Activated CD4-positive, alpha-beta T cell treated with anti-CD3 and anti-CD28 coated beads for 36 hours (primary cell): ENCODE measurements at regions of chr16 and their contacts with region 1.

Region 1: GRCh38 chr16:88452482-88453216 is 431 bp upstream of the ZFPM1 start:
- DNase-seq: peak; percentile 100
- ATAC-seq: peak; percentile 68
- H3K4me3 Mint-ChIP-seq: peak overlapping the region; percentile 74
- H3K27ac Mint-ChIP-seq: peak overlapping the region; percentile 78
- H3K4me1 Mint-ChIP-seq: peaks cover 24% of the 10 kb centered on the region
- H3K27me3 Mint-ChIP-seq: no peaks in the 10 kb centered on the region

Region 2: GRCh38 chr16:87387942-87388817 is 1064.5 kb before region 1 on chr16:
- CTCF ChIA-PET with region 1: no interaction called
- POLR2A ChIA-PET with region 1: no interaction called
- intact Hi-C with region 1: loop called in 1 of 2 experiments (anchors 2 kb)
- DNase-seq: peak; percentile 92
- ATAC-seq: peak; percentile 74
- H3K4me3 Mint-ChIP-seq: peak overlapping the region; percentile 36
- H3K27ac Mint-ChIP-seq: peak overlapping the region; percentile 95
- H3K4me1 Mint-ChIP-seq: peaks cover 49% of the 10 kb centered on the region
- H3K27me3 Mint-ChIP-seq: no peaks in the 10 kb centered on the region

Region 3: DNA sequence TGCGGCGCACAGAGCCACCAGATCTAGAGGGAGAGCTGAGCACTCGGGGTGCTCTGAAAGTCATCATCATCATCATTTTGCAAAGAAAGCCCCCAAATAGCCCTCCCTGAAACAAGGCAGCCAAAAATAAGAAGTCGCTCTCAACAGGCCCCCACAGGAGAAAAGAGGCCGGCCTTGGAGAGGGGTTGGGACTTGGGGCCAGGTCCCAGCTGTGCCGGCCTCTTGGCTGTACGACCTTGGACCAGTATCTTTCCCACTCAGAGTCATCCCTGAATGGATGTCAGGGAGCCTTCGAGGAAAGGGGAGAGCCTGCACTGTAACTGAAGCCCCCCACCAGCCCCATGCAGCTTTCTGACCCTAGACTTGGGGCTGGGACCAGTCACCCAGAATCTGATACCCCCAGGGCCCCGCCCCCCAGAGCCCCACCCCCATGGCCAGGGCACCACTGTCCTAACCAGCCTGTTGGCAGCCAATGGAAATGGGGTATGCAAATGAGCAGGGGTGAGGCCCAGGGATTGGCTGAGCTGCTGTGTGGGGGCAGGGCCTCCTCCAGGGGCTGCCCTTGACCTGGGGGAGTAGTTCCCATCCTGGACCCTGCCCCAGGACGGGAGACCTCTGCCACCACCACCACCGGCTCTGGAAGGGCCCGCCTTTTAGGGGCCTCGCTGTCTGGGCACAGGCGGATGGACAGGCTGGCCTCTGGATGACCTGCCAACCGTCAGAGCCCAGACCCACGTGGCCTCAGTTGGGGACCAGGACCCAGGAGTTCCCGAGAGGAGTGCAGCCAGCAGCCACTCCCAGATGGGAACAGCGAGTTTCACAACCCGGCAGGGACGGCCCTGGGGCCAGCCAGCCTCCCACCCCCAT is 15.9 kb after region 1 on chr16:
- CTCF ChIA-PET with region 1: interaction called, 3 read pairs
- POLR2A ChIA-PET with region 1: no interaction called
- intact Hi-C with region 1: loop called (anchors 1 to 2 kb)
- DNase-seq: peak; percentile 61
- ATAC-seq: peak; percentile 66
- H3K4me3 Mint-ChIP-seq: no peak overlapping the region
- H3K27ac Mint-ChIP-seq: no peak overlapping the region
- H3K4me1 Mint-ChIP-seq: peaks cover 62% of the 10 kb centered on the region
- H3K27me3 Mint-ChIP-seq: no peaks in the 10 kb centered on the region

Region 4: DNA sequence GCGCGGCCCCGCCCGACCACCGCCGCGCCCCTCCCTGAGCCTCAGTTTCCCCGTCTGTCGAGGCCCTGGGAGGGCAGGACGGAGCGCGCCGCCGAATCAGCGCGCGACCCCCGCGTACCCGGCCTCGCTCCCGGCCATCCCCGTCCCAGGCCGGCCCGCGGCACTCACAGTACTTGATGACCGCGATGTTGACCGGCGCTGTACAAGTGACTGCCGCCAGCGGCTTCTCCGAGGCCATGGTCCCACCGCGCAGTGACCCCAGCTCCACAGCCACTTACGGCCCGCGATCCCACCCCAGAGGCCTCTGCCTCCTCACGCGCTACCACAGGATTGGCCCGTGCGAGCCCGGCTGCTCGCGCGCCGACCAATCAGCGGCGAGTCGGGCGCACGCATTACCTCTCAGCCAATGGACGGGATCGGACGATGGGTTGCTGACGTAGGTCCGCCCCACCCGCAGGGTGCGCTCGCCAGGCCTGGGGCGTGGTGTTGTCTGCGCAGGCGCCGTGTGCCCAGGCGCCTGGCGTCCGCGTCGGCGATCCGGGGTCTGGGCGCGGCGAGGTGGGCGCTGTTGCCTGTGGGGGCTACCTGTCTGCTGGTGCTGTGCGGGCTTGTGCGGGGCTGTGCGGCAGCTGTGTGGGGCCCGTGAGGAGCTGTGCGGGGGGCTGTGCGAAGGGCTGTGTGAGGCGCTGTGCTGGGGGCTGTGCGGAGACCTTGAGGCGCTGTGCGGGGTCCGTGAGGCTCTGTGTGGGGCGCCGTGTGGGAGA is 210.4 kb after region 1 on chr16 and contains the start of gene MVD:
- CTCF ChIA-PET with region 1: no interaction called
- POLR2A ChIA-PET with region 1: no interaction called
- intact Hi-C with region 1: loop called in 1 of 2 experiments (anchors 1 kb)
- DNase-seq: peak; percentile 98
- ATAC-seq: peak; percentile 99
- H3K4me3 Mint-ChIP-seq: peak within 1 kb of the TSS; percentile 92
- H3K27ac Mint-ChIP-seq: peak within 1 kb of the TSS; percentile 88
- H3K4me1 Mint-ChIP-seq: peaks cover 14% of the 10 kb centered on the region
- H3K27me3 Mint-ChIP-seq: no peaks in the 10 kb centered on the region
- total RNA-seq, gene MVD: 62.8 to 81.1 TPM

Region 5: GRCh38 chr16:88803264-88803987 is 350.8 kb after region 1 on chr16 and contains the start of gene CDT1:
- CTCF ChIA-PET with region 1: no interaction called
- POLR2A ChIA-PET with region 1: no interaction called
- intact Hi-C with region 1: loop called in 1 of 2 experiments (anchors 1 kb)
- DNase-seq: peak; percentile 90
- ATAC-seq: peak; percentile 32
- H3K4me3 Mint-ChIP-seq: peak within 1 kb of the TSS; percentile 83
- H3K27ac Mint-ChIP-seq: peak within 1 kb of the TSS; percentile 94
- H3K4me1 Mint-ChIP-seq: peaks cover 24% of the 10 kb centered on the region
- H3K27me3 Mint-ChIP-seq: no peaks in the 10 kb centered on the region
- total RNA-seq, gene CDT1: 136 to 182 TPM

Region 6: GRCh38 chr16:89193021-89193575 is 740.4 kb after region 1 on chr16:
- CTCF ChIA-PET with region 1: no interaction called
- POLR2A ChIA-PET with region 1: no interaction called
- intact Hi-C with region 1: loop called in 1 of 2 experiments (anchors 1 kb)
- DNase-seq: no peak
- ATAC-seq: peak; percentile 78
- H3K4me3 Mint-ChIP-seq: no peak overlapping the region
- H3K27ac Mint-ChIP-seq: no peak overlapping the region
- H3K4me1 Mint-ChIP-seq: no peaks in the 10 kb centered on the region
- H3K27me3 Mint-ChIP-seq: no peaks in the 10 kb centered on the region

Region 7: GRCh38 chr16:89922884-89923690 is 1470.4 kb after region 1 on chr16 and contains the start of gene TUBB3:
- CTCF ChIA-PET with region 1: no interaction called
- POLR2A ChIA-PET with region 1: no interaction called
- intact Hi-C with region 1: loop called in 1 of 2 experiments (anchors 10 kb)
- DNase-seq: peak; percentile 72
- ATAC-seq: peak; percentile 34
- H3K4me3 Mint-ChIP-seq: peak within 1 kb of the TSS; percentile 55
- H3K27ac Mint-ChIP-seq: no peak within 1 kb of the TSS
- H3K4me1 Mint-ChIP-seq: peaks cover 43% of the 10 kb centered on the region
- H3K27me3 Mint-ChIP-seq: peaks cover 38% of the 10 kb centered on the region
- total RNA-seq, gene TUBB3: 0.40 to 0.43 TPM